GM10248 (cell line): ENCODE measurements at regions of chr1 and their contacts with region 1.

Region 1: GRCh38 chr1:1122078-1122811 is 6.4 kb upstream of the C1orf159 start:
- DNase-seq: peak; percentile 91
- CTCF ChIP-seq: peak; percentile 94

Region 2: GRCh38 chr1:941588-942383 is 180.5 kb before region 1 on chr1:
- CTCF ChIA-PET with region 1: no interaction called
- POLR2A ChIA-PET with region 1: no interaction called
- DNase-seq: peak; percentile 61
- CTCF ChIP-seq: no peak

Region 3: GRCh38 chr1:1110561-1110971 is 11.7 kb before region 1 on chr1:
- CTCF ChIA-PET with region 1: interaction called, 12 read pairs
- POLR2A ChIA-PET with region 1: no interaction called
- DNase-seq: no peak
- CTCF ChIP-seq: no peak

Region 4: GRCh38 chr1:1157426-1157913 is 35.2 kb after region 1 on chr1:
- CTCF ChIA-PET with region 1: interaction called, 14 read pairs
- POLR2A ChIA-PET with region 1: no interaction called
- DNase-seq: peak; percentile 90
- CTCF ChIP-seq: no peak

Region 5: GRCh38 chr1:1206376-1207260 is 84.4 kb after region 1 on chr1 and contains the start of gene TNFRSF18:
- CTCF ChIA-PET with region 1: interaction called, 21 read pairs
- POLR2A ChIA-PET with region 1: no interaction called
- DNase-seq: peak; percentile 70
- CTCF ChIP-seq: no peak

Region 6: GRCh38 chr1:1237874-1238701 is 115.8 kb after region 1 on chr1:
- CTCF ChIA-PET with region 1: interaction called, 10 read pairs
- POLR2A ChIA-PET with region 1: no interaction called
- DNase-seq: no peak
- CTCF ChIP-seq: no peak

Region 7: DNA sequence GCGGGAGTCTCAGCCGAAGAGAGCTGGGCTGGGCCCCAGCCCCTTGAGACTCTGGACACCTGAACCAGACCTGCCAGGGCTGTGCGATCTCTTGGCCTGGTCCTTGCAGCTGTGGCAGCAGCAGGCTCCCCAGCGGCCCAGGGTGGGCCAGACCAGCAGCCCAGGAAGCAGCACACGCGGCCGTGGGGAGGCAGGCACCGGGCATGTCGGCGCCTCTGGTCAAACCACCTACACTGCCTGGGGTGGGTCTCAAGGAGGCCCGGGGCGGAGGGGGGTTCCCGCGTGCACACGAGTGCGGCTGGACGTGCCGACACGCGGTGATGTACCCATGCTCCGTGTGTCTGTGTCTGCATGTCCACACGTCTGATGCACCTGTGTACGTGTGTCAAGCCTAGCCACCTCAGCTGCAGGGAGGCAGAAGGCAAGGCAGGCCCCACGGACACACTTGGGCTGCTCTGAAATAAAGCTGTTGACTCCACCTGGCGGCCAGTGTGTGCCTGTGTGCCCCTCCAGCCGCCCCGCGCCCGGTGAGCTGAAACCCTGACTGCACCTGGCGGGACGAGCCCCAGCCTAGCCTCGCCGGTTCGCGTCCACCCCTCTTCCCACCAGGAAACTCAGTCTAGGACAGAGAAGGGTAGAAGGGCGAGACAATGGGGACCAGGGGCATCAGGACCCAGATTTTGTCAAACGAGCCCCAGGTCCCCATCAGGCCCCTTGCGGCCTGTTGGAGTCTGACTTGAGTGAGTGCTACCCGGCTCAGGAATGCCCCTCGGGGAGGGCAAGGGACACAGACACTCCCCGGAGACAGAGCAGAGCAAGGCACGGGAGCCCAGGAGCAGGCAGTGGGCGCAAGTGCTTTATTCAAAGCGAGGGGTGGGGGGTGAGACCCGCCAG is 169.6 kb after region 1 on chr1:
- CTCF ChIA-PET with region 1: interaction called, 87 read pairs
- POLR2A ChIA-PET with region 1: no interaction called
- DNase-seq: peak; percentile 81
- CTCF ChIP-seq: peak; percentile 81

Region 8: GRCh38 chr1:1517973-1518620 is 395.9 kb after region 1 on chr1:
- CTCF ChIA-PET with region 1: no interaction called
- POLR2A ChIA-PET with region 1: no interaction called
- DNase-seq: no peak
- CTCF ChIP-seq: no peak